OCI-LY7 (cell line): ENCODE measurements at regions of chr2 and their contacts with region 1.

Region 1: DNA sequence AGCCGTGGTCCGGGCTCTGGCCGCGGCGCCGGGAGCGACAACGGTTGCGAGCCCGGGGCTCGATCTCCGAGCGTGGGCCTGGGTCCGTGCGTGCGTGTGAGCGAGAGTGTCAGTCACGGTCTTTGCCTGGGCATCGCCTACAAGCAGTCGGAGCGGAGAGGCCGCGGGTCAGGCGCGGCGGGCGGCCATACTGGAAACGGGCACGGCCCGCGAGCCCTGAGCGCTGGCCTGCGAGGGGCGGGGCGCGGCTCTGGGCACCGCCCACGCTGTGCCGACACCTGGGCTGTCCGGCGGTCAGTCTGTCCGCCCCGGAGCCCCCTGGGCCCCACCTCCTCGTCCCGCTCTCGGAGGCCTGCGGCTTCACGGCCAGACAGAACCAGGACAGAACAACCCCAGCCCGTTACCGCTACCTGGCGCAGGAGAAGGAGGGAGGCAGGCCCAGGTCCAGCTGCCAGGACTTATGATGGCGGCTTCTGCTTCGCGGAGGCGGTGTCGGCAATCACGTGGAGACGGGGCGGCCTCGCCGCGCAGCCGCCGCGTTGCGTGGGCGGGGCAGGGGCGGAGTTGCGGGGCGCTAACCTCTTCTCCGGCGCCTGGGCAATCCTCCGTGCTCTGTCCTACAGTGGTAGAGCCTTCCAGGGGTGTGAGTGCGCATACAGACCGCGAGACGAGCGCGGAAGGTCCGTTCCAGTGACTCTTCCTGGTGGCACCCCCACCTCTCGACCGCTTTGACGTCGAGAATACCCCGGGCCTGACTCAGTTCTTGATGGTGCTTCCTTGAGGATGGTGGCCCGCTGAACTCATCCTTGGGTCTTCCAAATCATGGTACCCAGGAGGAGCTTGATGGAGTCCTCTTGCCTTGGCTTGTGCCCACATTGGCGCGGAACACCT is at the start of gene TMEM131:
- DNase-seq: peak; percentile 95
- H3K4me3 ChIP-seq: peak within 1 kb of the TSS; percentile 72
- H3K27ac ChIP-seq: peak within 1 kb of the TSS; percentile 80
- H3K4me1 ChIP-seq: peaks cover 42% of the 10 kb centered on the region
- CTCF ChIP-seq: no peak
- total RNA-seq, gene TMEM131: 12.2 and 17.4 TPM in 2 replicates

Region 2: DNA sequence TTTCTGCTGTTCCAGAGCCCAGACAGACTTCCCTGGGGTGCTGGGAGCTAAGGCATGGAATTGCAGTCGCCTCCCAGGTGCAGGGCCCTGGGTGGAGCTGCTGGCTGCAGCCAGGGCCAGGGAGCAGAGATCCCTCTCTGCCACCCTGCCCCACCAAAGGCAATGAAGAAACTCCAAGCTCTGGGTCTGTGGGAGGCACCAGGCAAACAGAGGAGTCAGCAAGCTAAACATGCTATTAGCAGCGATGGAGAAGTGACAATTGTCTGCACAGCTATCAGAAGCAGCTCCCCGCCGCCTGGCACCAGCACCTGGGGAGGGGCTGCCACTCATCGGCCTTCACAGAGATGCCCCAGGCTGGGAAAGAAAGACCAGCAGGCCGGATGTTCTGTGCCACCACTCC is 378.1 kb before region 1 on chr2:
- CTCF ChIA-PET with region 1: no interaction called
- POLR2A ChIA-PET with region 1: no interaction called
- intact Hi-C with region 1: no loop called
- DNase-seq: no peak
- H3K4me3 ChIP-seq: no peak overlapping the region
- H3K27ac ChIP-seq: no peak overlapping the region
- H3K4me1 ChIP-seq: no peaks in the 10 kb centered on the region
- CTCF ChIP-seq: no peak

Region 3: GRCh38 chr2:97806738-97807618 is 189.0 kb before region 1 on chr2:
- CTCF ChIA-PET with region 1: no interaction called
- POLR2A ChIA-PET with region 1: no interaction called
- intact Hi-C with region 1: loop called (anchors 2 kb)
- DNase-seq: peak; percentile 79
- H3K4me3 ChIP-seq: no peak overlapping the region
- H3K27ac ChIP-seq: no peak overlapping the region
- H3K4me1 ChIP-seq: peaks cover 5% of the 10 kb centered on the region
- CTCF ChIP-seq: peak; percentile 96

Region 4: DNA sequence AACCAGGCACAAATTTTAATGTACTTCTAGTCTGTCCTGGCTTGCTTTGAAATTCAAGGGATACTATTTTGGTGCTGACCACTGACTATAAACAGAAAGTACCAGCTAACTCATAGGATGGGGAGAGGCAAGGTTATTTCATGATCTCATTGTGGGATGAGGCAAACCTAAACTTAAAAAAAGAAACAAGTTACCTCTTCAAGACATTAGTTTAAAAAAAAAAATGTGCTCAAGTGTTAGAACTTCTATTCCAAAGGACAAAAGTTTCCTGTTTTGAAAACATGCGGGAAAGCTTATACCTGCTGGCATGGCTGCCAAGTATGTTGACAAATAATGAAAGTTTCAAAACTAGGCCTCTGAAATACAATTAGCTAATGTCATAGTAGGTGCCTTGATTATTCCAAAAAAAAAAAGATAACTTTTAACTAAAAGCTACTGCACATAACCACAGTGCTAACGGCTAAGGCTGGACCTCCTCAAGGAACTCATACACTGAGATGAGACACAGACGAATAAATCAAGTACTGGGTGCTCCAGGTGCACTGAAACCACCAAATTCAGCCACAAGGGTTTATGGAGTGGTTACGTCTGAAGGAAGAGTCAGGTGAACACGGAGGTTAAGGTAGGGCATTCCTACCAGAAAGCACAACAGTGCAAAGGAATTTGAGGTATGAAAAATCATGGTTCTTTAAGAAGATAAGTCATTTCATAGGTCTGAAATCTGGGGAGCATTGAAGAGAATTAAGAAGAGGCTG is 38.4 kb before region 1 on chr2:
- CTCF ChIA-PET with region 1: no interaction called
- POLR2A ChIA-PET with region 1: interaction called, 4 read pairs
- intact Hi-C with region 1: loop called (anchors 5 kb)
- DNase-seq: peak; percentile 55
- H3K4me3 ChIP-seq: peak overlapping the region; percentile 48
- H3K27ac ChIP-seq: peak overlapping the region; percentile 71
- H3K4me1 ChIP-seq: peaks cover 57% of the 10 kb centered on the region
- CTCF ChIP-seq: no peak

Region 5: GRCh38 chr2:98012561-98012991 is 16.6 kb after region 1 on chr2:
- CTCF ChIA-PET with region 1: no interaction called
- POLR2A ChIA-PET with region 1: interaction called, 6 read pairs
- intact Hi-C with region 1: loop called (anchors 2 kb)
- DNase-seq: peak; percentile 88
- H3K4me3 ChIP-seq: peak overlapping the region; percentile 61
- H3K27ac ChIP-seq: peak overlapping the region; percentile 89
- H3K4me1 ChIP-seq: peaks cover 82% of the 10 kb centered on the region
- CTCF ChIP-seq: no peak

Region 6: GRCh38 chr2:98026927-98027522 is 31.0 kb after region 1 on chr2:
- CTCF ChIA-PET with region 1: no interaction called
- POLR2A ChIA-PET with region 1: interaction called, 5 read pairs
- intact Hi-C with region 1: loop called (anchors 1 kb)
- DNase-seq: peak; percentile 86
- H3K4me3 ChIP-seq: peak overlapping the region; percentile 58
- H3K27ac ChIP-seq: peak overlapping the region; percentile 90
- H3K4me1 ChIP-seq: peaks cover 63% of the 10 kb centered on the region
- CTCF ChIP-seq: no peak

Region 7: GRCh38 chr2:98086491-98087446 is 90.8 kb after region 1 on chr2 and contains the start of gene VWA3B:
- CTCF ChIA-PET with region 1: no interaction called
- POLR2A ChIA-PET with region 1: no interaction called
- intact Hi-C with region 1: loop called (anchors 5 kb)
- DNase-seq: peak; percentile 70
- H3K4me3 ChIP-seq: peak within 1 kb of the TSS; percentile 73
- H3K27ac ChIP-seq: no peak within 1 kb of the TSS
- H3K4me1 ChIP-seq: peaks cover 45% of the 10 kb centered on the region
- CTCF ChIP-seq: no peak
- total RNA-seq, gene VWA3B: not detected in 2 replicates